Activated CD4-positive, alpha-beta memory T cell treated with anti-CD3 and anti-CD28 coated beads for 36 hours (primary cell): ENCODE measurements at regions of chr1 and their contacts with region 1.

Region 1: GRCh38 chr1:25117233-25117823 is 115.0 kb downstream of the SYF2 start:
- DNase-seq: peak; percentile 58
- H3K4me3 Mint-ChIP-seq: no peak overlapping the region
- H3K27ac Mint-ChIP-seq: no peak overlapping the region
- H3K4me1 Mint-ChIP-seq: peaks cover 28% of the 10 kb centered on the region
- H3K27me3 Mint-ChIP-seq: no peaks in the 10 kb centered on the region

Region 2: GRCh38 chr1:25198663-25199252 is 81.4 kb after region 1 on chr1:
- CTCF ChIA-PET with region 1: no interaction called
- POLR2A ChIA-PET with region 1: no interaction called
- intact Hi-C with region 1: loop called (anchors 10 kb)
- DNase-seq: no peak
- H3K4me3 Mint-ChIP-seq: no peak overlapping the region
- H3K27ac Mint-ChIP-seq: no peak overlapping the region
- H3K4me1 Mint-ChIP-seq: peaks cover 10% of the 10 kb centered on the region
- H3K27me3 Mint-ChIP-seq: peaks cover 3% of the 10 kb centered on the region

Region 3: DNA sequence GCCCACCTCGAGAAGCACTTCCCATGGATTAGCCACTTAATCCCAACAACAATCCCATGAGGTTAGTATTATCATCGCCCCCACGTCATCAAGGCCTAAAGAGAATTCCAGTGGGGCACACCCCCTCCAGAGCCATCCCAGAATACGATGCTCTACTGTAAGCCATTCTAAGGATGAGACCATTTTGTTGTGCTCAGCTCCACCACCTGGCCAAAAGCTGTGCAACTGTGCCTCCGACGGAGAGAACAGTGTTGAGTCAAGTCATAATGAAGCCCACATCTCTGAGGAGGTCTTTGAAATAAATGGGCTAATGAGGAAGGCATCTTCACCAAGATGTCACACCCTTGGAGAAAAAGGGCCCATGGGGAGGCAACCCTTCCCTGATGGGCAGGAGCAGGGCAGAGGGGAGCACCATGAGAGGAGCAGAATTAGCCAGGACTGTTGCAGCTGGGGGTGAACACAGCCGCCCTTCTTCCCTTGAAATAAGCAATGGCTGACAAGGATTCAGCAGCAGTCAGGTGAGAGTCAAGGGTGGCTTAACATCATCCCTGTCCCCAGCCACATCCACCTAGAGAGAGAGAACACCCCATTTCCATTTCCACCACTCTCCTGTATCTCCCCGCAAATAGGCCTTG is 100.4 kb after region 1 on chr1:
- CTCF ChIA-PET with region 1: no interaction called
- POLR2A ChIA-PET with region 1: no interaction called
- intact Hi-C with region 1: no loop called
- DNase-seq: no peak
- H3K4me3 Mint-ChIP-seq: no peak overlapping the region
- H3K27ac Mint-ChIP-seq: no peak overlapping the region
- H3K4me1 Mint-ChIP-seq: peaks cover 2% of the 10 kb centered on the region
- H3K27me3 Mint-ChIP-seq: no peaks in the 10 kb centered on the region